Ovary (tissue), 10 donors: ENCODE measurements at regions of chr4 and their contacts with region 1.

Region 1: GRCh38 chr4:17614416-17615299 is at the start of gene MED28:
- DNase-seq: peak; percentile 94 to 97 (median 97)
- H3K4me3 ChIP-seq: peak within 1 kb of the TSS; percentile 84
- H3K27ac ChIP-seq: peak within 1 kb of the TSS; percentile 56 to 68
- H3K4me1 ChIP-seq: peaks cover 8% of the 10 kb centered on the region
- H3K27me3 ChIP-seq: no peaks in the 10 kb centered on the region
- CTCF ChIP-seq: peak in 1 of 3 donors; percentile 28
- EP300 ChIP-seq: no peak
- POLR2A ChIP-seq: peak; percentile 93
- total RNA-seq, gene MED28: 14.7 to 78.7 (median 62.1) TPM

Region 2: DNA sequence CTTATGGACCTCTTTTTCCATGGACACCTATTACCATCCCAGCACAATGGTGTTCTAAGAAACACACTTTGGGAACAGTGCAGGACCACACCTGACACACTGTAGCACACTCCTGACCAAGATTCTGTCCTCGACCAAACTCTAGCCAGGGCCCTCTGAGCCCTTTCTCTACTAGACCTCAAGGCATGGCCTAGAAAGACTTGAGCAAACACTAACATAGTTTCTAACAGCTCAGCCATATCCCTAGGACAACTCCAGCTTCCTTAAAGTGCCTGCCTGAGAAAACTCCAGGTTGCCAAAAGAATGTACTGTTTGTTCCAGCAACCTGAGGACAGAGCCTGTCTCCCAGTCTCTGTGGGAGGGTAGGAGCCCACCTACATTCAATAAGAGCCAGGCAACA is 151.1 kb before region 1 on chr4:
- intact Hi-C with region 1: no loop called
- DNase-seq: no peak
- H3K4me3 ChIP-seq: no peak overlapping the region
- H3K27ac ChIP-seq: no peak overlapping the region
- H3K4me1 ChIP-seq: no peaks in the 10 kb centered on the region
- H3K27me3 ChIP-seq: no peaks in the 10 kb centered on the region
- CTCF ChIP-seq: no peak
- EP300 ChIP-seq: no peak
- POLR2A ChIP-seq: no peak

Region 3: GRCh38 chr4:17562160-17562559 is 52.5 kb before region 1 on chr4:
- intact Hi-C with region 1: loop called in 1 of 4 experiments (anchors 5 kb)
- DNase-seq: no peak
- H3K4me3 ChIP-seq: no peak overlapping the region
- H3K27ac ChIP-seq: no peak overlapping the region
- H3K4me1 ChIP-seq: no peaks in the 10 kb centered on the region
- H3K27me3 ChIP-seq: no peaks in the 10 kb centered on the region
- CTCF ChIP-seq: no peak
- EP300 ChIP-seq: no peak
- POLR2A ChIP-seq: no peak

Region 4: DNA sequence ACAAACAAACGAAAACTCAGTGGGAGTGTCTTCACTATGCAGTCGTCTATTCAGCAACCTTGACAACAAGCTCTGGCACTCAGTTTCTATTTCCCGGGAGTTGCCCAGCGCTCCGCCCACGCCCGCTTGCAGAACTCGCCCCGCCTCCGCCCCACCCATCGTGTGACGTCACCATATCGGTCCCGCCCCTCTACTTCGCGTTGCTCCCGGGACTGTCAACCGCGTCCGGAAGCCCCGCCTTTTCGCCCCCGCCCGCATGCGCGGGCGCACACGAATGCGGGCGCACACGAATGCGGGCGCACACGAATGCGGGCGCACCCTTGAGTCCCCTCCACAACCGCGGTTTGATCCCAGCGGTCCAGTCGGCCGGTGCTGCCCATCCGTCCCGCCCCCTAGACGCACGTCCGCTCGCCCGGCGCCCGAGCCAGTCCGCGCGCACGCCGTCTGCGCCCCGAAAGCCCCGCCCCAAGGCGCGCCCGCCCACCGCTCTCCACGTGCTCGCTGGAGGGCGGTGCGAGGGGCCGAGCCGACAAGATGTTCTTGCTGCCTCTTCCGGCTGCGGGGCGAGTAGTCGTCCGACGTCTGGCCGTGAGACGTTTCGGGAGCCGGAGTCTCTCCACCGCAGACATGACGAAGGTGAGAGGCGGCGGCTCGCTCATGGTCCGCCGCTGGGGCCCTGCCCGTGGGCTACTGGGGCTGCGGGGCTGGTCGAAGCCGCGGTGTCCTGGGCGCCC is 37.6 kb before region 1 on chr4 and contains the start of gene LAP3:
- intact Hi-C with region 1: loop called in 2 of 4 experiments (anchors 5 kb)
- DNase-seq: peak; percentile 96 to 100 (median 99)
- H3K4me3 ChIP-seq: peak within 1 kb of the TSS; percentile 64
- H3K27ac ChIP-seq: peak within 1 kb of the TSS in 1 of 2 donors; percentile 77
- H3K4me1 ChIP-seq: peaks cover 5% of the 10 kb centered on the region
- H3K27me3 ChIP-seq: no peaks in the 10 kb centered on the region
- CTCF ChIP-seq: no peak
- EP300 ChIP-seq: no peak
- POLR2A ChIP-seq: peak; percentile 63
- total RNA-seq, gene LAP3: 23.5 to 54.7 (median 33.9) TPM